ENCODE measurements at regions of chr10 and their contacts with region 1.

Region 1: DNA sequence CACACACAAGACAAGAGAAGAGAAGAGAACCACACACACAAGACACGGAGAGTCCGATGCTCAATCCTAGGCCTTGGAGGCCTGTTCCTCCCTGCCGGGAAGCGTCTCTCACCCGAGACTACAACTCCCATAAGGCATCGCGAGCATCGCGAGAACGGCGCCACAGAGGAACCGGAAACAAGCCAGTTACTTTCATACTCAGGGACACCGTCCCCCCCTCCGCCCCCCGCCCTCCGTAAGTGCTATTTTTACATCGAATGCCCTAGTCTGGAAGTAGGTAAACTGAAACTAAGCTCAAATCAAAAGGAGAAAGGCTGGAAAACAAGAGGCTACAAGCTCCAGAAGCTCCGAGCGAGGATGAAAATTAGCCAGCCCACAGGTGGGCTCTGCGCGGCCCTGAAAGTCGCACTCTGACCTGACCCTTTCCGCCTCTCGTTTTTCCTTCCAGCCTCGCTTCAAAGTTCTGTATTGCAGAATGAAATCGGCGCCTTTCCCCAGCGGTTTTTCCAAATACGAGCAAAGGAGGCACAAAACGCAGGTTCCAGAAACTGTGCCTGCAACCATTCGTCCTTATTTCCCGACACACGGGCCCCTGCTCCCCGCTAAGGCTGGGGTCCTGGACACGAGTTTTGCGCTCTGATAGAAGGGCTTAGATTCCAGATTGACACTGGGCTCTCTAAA is 11.5 kb upstream of the DNAJC12 start:
- DNase-seq: peak; percentile 98
- H3K4me3 Mint-ChIP-seq: peak overlapping the region; percentile 97
- H3K27ac Mint-ChIP-seq: peak overlapping the region; percentile 98
- H3K4me1 Mint-ChIP-seq: peaks cover 8% of the 10 kb centered on the region
- H3K27me3 Mint-ChIP-seq: no peaks in the 10 kb centered on the region

Region 2: GRCh38 chr10:67803588-67804394 is 45.7 kb before region 1 on chr10:
- CTCF ChIA-PET with region 1: no interaction called
- intact Hi-C with region 1: loop called (anchors 1 kb)
- DNase-seq: peak; percentile 51
- H3K4me3 Mint-ChIP-seq: no peak overlapping the region
- H3K27ac Mint-ChIP-seq: peak overlapping the region; percentile 87
- H3K4me1 Mint-ChIP-seq: peaks cover 10% of the 10 kb centered on the region
- H3K27me3 Mint-ChIP-seq: no peaks in the 10 kb centered on the region

Region 3: DNA sequence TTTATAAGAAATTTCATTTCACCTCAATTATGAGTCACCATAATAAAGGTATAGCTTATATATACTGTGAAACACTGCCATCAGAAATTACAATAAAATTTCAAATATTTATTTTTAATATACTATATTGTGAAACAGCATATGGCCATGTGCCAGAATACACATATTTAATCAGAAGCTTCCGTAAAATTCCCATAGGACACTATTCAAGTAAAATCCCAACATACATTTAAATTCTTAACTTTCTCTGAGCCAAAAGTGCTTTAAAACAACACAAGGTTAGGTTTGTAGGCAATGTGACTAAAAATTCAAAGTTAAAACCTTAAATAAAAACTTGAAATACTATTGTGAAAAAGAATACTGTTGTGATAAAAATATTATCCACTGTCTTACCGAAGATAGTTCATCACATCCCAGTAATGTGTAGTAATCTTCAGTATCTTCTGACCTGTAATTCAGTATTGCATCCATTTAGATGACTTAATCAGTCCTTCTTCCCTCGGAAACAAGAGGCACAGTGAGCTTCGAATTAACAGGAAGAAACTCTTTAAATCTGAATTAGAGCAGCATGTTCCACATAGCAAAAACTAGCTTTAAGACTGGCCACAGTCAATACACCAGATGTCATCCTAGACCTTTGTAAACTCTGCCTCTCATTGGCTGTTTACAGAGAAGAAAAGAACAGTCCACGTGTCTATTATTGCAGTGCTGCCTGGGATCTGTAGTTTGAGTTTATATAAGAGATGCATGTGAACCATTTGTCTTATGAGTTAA is 11.7 kb before region 1 on chr10 and contains the start of gene DNAJC12:
- CTCF ChIA-PET with region 1: interaction called, 3 read pairs
- intact Hi-C with region 1: loop called (anchors 1 kb)
- DNase-seq: no peak
- H3K4me3 Mint-ChIP-seq: peak within 1 kb of the TSS; percentile 56
- H3K27ac Mint-ChIP-seq: no peak within 1 kb of the TSS
- H3K4me1 Mint-ChIP-seq: peaks cover 2% of the 10 kb centered on the region
- H3K27me3 Mint-ChIP-seq: no peaks in the 10 kb centered on the region
- total RNA-seq, gene DNAJC12: 13.2 to 13.9 TPM

Region 4: DNA sequence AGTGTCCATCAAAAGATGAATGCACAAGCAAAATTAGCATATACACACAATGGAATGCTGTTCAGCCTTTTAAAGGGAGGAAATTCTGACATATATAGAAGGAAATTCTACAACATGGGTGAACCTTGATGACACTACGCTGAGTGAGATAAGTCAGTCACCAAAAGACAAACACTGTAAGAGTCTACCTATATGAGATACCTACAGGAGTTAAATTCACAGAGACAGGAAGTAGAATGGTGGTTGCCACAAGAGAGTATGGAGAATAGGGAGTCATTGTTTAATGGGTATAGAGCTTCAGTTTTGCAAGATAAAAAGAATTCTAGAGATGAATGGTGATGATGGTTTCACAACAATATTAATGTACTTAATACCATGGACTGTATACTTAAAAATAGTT is 173.8 kb after region 1 on chr10:
- CTCF ChIA-PET with region 1: no interaction called
- intact Hi-C with region 1: no loop called
- DNase-seq: no peak
- H3K4me3 Mint-ChIP-seq: no peak overlapping the region
- H3K27ac Mint-ChIP-seq: no peak overlapping the region
- H3K4me1 Mint-ChIP-seq: peaks cover 1% of the 10 kb centered on the region
- H3K27me3 Mint-ChIP-seq: no peaks in the 10 kb centered on the region

Region 5: GRCh38 chr10:68074775-68075549 is 225.5 kb after region 1 on chr10 and contains the start of gene HERC4:
- CTCF ChIA-PET with region 1: no interaction called
- intact Hi-C with region 1: loop called (anchors 1 kb)
- DNase-seq: peak; percentile 92
- H3K4me3 Mint-ChIP-seq: peak within 1 kb of the TSS; percentile 97
- H3K27ac Mint-ChIP-seq: peak within 1 kb of the TSS; percentile 91
- H3K4me1 Mint-ChIP-seq: peaks cover 33% of the 10 kb centered on the region
- H3K27me3 Mint-ChIP-seq: no peaks in the 10 kb centered on the region
- total RNA-seq, gene HERC4: 42.2 to 45.0 TPM

Region 6: DNA sequence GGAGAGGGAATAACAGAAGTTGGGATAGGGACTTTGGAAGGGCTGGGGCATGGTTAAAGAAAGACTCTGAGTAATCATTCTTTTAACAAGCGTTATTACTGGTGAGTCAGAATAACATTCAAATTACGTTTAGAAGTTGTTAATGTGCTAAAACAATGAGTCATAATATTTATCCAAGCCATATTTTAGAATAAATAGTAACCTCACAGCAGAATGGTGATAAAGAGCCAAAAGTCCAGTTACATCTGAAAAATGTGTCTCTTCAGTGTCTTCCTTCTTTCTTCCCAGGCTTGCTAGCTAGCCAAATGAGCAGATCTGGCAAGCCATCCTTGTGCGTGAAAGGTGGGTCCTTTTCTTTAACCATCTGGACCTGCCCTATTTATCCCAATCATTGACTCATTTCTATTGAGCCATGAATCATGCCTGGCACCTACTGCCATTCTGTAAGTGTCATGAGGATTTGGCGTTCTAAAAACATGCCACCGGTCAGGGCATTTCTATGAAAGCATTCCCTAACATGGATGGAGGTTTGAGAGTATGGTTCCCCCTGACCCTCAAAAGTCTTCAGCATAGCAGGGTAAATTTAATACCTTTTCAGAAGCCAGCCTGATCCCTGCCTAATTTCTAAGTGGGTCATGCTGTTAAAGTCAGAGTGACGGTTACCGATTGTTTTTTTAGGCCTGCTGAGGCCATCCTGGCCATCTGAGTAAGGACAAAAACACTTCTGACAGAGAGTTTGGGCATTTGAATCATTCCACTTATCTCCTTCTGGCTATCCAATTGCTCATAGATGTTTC is 286.6 kb after region 1 on chr10:
- CTCF ChIA-PET with region 1: no interaction called
- intact Hi-C with region 1: no loop called
- DNase-seq: no peak
- H3K4me3 Mint-ChIP-seq: no peak overlapping the region
- H3K27ac Mint-ChIP-seq: no peak overlapping the region
- H3K4me1 Mint-ChIP-seq: no peaks in the 10 kb centered on the region
- H3K27me3 Mint-ChIP-seq: peaks cover 7% of the 10 kb centered on the region

Region 7: GRCh38 chr10:68301790-68302502 is 452.5 kb after region 1 on chr10:
- CTCF ChIA-PET with region 1: interaction called, 10 read pairs
- intact Hi-C with region 1: no loop called
- DNase-seq: no peak
- H3K4me3 Mint-ChIP-seq: no peak overlapping the region
- H3K27ac Mint-ChIP-seq: no peak overlapping the region
- H3K4me1 Mint-ChIP-seq: no peaks in the 10 kb centered on the region
- H3K27me3 Mint-ChIP-seq: no peaks in the 10 kb centered on the region